Calu3 (cell line): ENCODE measurements at regions of chr2 and their contacts with region 1.

Region 1: GRCh38 chr2:74919827-74920226 is 38.6 kb upstream of the POLE4 start:
- DNase-seq: peak; percentile 83
- H3K4me3 Mint-ChIP-seq: peak overlapping the region; percentile 12
- H3K27ac Mint-ChIP-seq: no peak overlapping the region
- H3K4me1 Mint-ChIP-seq: peaks cover 11% of the 10 kb centered on the region
- H3K27me3 Mint-ChIP-seq: peaks cover 11% of the 10 kb centered on the region
- CTCF ChIP-seq: peak; percentile 95

Region 2: GRCh38 chr2:74982577-74982976 is 62.8 kb after region 1 on chr2:
- CTCF ChIA-PET with region 1: no interaction called
- intact Hi-C with region 1: loop called (anchors 1 kb)
- DNase-seq: no peak
- H3K4me3 Mint-ChIP-seq: no peak overlapping the region
- H3K27ac Mint-ChIP-seq: no peak overlapping the region
- H3K4me1 Mint-ChIP-seq: no peaks in the 10 kb centered on the region
- H3K27me3 Mint-ChIP-seq: no peaks in the 10 kb centered on the region
- CTCF ChIP-seq: no peak

Region 3: GRCh38 chr2:75035444-75036353 is 115.9 kb after region 1 on chr2:
- CTCF ChIA-PET with region 1: no interaction called
- intact Hi-C with region 1: loop called (anchors 10 kb)
- DNase-seq: no peak
- H3K4me3 Mint-ChIP-seq: no peak overlapping the region
- H3K27ac Mint-ChIP-seq: no peak overlapping the region
- H3K4me1 Mint-ChIP-seq: no peaks in the 10 kb centered on the region
- H3K27me3 Mint-ChIP-seq: no peaks in the 10 kb centered on the region
- CTCF ChIP-seq: no peak

Region 4: GRCh38 chr2:75608684-75609333 is 689.0 kb after region 1 on chr2:
- CTCF ChIA-PET with region 1: no interaction called
- intact Hi-C with region 1: loop called (anchors 5 kb)
- DNase-seq: peak; percentile 69
- H3K4me3 Mint-ChIP-seq: no peak overlapping the region
- H3K27ac Mint-ChIP-seq: no peak overlapping the region
- H3K4me1 Mint-ChIP-seq: no peaks in the 10 kb centered on the region
- H3K27me3 Mint-ChIP-seq: peaks cover 83% of the 10 kb centered on the region
- CTCF ChIP-seq: peak; percentile 91